Endothelial cell of umbilical vein (primary cell): ENCODE measurements at regions of chr4 and their contacts with region 1.

Region 1: DNA sequence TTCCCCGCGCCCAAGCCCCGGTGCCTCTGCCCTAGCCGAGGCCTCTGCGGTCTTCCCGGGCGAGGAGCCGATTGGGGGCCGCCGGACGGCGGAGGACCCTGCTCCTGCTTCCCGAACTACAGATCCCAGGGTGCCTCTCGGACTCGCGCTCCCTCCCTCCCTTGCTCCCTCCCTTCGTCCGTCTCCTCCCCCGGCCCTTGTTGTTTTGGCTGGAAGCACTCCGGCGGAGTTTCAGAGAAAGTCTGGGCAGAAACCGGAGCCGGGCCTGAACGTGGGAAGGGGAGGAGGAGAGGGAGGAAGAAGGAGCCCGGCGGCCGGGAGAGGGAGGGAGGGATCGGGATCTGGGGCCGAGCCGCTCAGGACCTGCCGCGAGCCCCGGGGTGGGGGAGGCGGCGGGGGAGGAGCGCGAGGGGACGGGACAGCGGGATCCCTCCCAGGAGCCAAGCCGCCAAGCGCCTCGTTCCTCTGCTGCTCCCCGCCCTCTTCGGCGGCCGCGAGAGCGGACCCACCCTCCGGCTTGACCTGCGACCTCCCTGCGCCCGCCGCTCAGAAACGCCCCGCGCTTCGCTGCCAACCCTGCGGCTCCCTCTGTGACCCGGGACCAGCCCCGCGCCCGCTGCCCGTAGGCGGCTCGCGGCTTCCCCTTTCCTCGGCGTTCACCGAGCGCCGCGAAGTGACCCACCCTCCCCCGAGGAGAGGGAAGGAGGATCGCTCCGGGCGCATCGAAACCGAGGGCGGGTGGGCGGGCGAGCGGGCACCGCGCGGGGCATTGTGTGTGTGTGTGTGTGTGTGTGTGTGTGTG is 496 bp upstream of the GAB1 start:
- DNase-seq: peak; percentile 93
- H3K4me3 ChIP-seq: peak overlapping the region; percentile 59 to 99 (median 60)
- H3K27ac ChIP-seq: peak overlapping the region; percentile 61
- H3K4me1 ChIP-seq: peaks cover 5% of the 10 kb centered on the region
- H3K27me3 ChIP-seq: no peaks in the 10 kb centered on the region
- CTCF ChIP-seq: no peak
- POLR2A ChIP-seq: no peak

Region 2: GRCh38 chr4:143071351-143071750 is 264.8 kb before region 1 on chr4:
- CTCF ChIA-PET with region 1: no interaction called
- POLR2A ChIA-PET with region 1: no interaction called
- dilution Hi-C with region 1: no loop called
- intact Hi-C with region 1: no loop called
- DNase-seq: no peak
- H3K4me3 ChIP-seq: no peak overlapping the region
- H3K27ac ChIP-seq: no peak overlapping the region
- H3K4me1 ChIP-seq: no peaks in the 10 kb centered on the region
- H3K27me3 ChIP-seq: no peaks in the 10 kb centered on the region
- CTCF ChIP-seq: no peak
- POLR2A ChIP-seq: no peak

Region 3: DNA sequence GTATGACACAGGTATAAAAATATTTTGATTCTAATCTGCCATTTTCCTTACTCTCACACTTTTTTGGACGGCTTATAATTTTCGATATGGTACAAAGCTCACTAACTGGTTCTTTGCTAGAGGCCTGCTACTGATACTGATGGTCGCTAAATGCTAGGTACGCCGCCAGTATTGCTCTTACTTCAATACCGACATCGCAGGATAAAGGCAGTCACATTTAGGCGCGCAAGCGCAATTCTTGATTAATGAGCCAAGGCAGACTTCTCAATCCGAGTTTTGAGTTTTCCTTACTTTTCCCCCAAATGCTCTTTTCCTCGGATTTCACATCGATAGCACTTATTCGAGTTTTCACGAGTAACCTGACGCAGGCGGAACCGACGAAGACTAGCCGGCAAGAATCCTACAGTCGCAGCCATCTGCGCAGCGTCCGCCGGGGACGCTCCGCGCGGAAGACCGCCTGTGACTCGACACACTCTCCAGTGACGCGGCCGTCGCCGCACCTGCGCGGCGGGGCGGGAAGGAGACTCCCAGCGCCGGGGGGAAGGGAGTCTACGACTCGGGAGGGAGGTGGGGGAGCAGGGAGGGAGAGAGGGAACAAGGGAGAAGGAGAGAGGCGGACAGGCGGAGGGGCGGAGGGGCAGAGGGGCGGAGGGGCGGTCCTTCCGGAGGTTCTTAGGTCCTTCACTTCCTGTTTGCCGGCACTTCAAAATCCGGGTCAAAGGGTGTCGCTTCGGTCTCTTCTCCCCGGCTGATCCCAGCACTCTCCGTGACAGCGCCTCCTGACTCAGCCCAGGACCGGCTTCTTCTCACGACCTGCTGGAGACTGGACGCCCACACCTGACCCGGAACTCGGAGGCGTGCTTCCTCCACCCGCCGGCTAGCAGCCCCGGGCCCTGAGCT is 151.7 kb before region 1 on chr4 and contains the start of gene USP38:
- CTCF ChIA-PET with region 1: interaction called, 3 read pairs
- POLR2A ChIA-PET with region 1: no interaction called
- dilution Hi-C with region 1: no loop called
- intact Hi-C with region 1: loop called (anchors 1 kb)
- DNase-seq: peak; percentile 90
- H3K4me3 ChIP-seq: peak within 1 kb of the TSS; percentile 64 to 84 (median 69)
- H3K27ac ChIP-seq: peak within 1 kb of the TSS; percentile 73
- H3K4me1 ChIP-seq: peaks cover 30% of the 10 kb centered on the region
- H3K27me3 ChIP-seq: no peaks in the 10 kb centered on the region
- CTCF ChIP-seq: no peak
- POLR2A ChIP-seq: peak; percentile 49
- total RNA-seq, gene USP38: 17.0 and 18.1 TPM in 2 replicates

Region 4: GRCh38 chr4:143286701-143287571 is 49.2 kb before region 1 on chr4:
- CTCF ChIA-PET with region 1: no interaction called
- POLR2A ChIA-PET with region 1: no interaction called
- dilution Hi-C with region 1: no loop called
- intact Hi-C with region 1: no loop called
- DNase-seq: no peak
- H3K4me3 ChIP-seq: no peak overlapping the region
- H3K27ac ChIP-seq: no peak overlapping the region
- H3K4me1 ChIP-seq: no peaks in the 10 kb centered on the region
- H3K27me3 ChIP-seq: peaks cover 0 to 5% of the 10 kb centered on the region in 2 experiments
- CTCF ChIP-seq: no peak
- POLR2A ChIP-seq: no peak

Region 5: GRCh38 chr4:143351774-143352451 is 15.7 kb after region 1 on chr4:
- CTCF ChIA-PET with region 1: interaction called, 13 read pairs
- POLR2A ChIA-PET with region 1: no interaction called
- dilution Hi-C with region 1: no loop called
- intact Hi-C with region 1: no loop called
- DNase-seq: peak; percentile 92
- H3K4me3 ChIP-seq: no peak overlapping the region
- H3K27ac ChIP-seq: peak overlapping the region; percentile 51
- H3K4me1 ChIP-seq: peaks cover 17% of the 10 kb centered on the region
- H3K27me3 ChIP-seq: no peaks in the 10 kb centered on the region
- CTCF ChIP-seq: no peak
- POLR2A ChIP-seq: no peak

Region 6: DNA sequence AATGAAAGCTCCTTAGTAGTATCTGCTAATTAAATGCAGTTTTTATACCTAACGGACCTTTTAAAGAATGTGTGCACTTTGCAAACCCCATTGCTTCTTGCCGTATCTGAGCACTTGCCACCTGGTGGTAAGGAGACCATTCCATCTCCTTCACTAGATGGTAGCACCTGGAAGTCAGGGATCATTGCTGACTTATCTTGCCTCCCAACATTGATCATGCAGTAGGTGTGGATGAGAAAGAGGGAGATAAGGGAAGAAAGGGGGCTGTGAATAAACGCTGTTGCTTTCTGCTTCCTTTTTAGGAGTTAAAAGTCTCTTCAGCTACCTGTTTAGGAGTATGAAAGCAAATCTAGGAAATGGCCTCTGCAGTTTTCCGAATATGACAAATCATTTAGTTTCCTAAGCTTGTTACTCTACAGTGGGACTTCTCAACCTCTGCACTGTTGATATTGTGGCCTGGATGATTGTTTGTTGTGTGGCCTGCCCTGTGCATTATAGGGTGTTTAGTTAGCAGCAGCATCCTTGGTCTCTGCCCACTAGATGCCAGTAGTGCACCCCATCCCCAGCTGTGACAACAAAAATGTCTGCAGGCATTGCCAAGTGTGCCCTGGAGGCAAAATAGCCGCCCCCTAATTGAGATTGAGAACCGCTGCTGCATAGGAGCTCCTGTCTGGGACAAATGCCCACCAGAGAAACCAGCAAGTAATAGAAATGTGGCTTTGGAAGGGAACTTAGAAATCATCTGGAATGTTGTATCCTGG is 39.3 kb after region 1 on chr4:
- CTCF ChIA-PET with region 1: interaction called, 14 read pairs
- POLR2A ChIA-PET with region 1: no interaction called
- dilution Hi-C with region 1: no loop called
- intact Hi-C with region 1: no loop called
- DNase-seq: peak; percentile 58
- H3K4me3 ChIP-seq: no peak overlapping the region
- H3K27ac ChIP-seq: no peak overlapping the region
- H3K4me1 ChIP-seq: no peaks in the 10 kb centered on the region
- H3K27me3 ChIP-seq: no peaks in the 10 kb centered on the region
- CTCF ChIP-seq: peak; percentile 21 to 53
- POLR2A ChIP-seq: no peak

Region 7: DNA sequence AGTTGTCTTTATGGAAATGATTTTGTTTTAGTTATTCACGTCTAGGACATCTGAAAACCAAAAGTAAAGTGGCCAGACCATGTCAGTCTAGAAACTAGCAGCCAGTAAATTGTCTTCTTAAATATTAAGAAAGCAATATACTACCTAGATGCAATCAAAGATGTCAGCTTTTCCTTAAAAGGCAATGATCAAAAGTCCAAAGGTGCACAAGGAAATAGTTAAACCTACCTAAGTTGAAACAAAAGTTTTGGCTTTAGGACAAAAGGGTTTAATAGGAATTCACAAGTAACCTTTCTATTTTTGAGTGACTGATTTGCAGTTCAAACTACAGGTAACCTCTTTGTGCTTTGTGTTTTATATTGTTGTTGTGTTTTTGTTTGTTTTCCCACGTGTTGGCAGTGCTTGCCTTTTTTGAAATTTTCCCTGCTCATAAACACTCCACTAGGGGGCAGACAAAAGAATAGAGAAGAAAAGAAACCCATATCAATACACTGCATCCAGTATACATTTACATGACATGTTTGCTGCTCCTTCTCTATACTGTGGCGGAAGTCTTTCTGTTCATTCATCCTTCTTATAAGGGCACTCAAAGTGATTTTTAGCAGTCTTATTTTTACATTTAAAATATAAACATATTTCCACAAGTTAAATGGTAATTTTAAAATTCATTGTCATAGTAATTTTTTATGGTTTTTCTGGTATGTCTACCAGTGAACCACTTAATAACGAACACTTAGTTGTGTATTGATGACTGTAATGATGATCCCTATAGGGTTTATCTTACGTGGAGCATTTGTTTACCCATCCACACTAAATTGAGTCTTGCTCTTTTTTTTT is 63.2 kb after region 1 on chr4:
- CTCF ChIA-PET with region 1: interaction called, 9 read pairs
- POLR2A ChIA-PET with region 1: no interaction called
- dilution Hi-C with region 1: no loop called
- intact Hi-C with region 1: loop called (anchors 1 kb)
- DNase-seq: peak; percentile 72
- H3K4me3 ChIP-seq: no peak overlapping the region
- H3K27ac ChIP-seq: no peak overlapping the region
- H3K4me1 ChIP-seq: peaks cover 33% of the 10 kb centered on the region
- H3K27me3 ChIP-seq: no peaks in the 10 kb centered on the region
- CTCF ChIP-seq: peak; percentile 46 to 48
- POLR2A ChIP-seq: no peak

Region 8: GRCh38 chr4:143513306-143514168 is 177.4 kb after region 1 on chr4 and contains the start of gene SMARCA5:
- CTCF ChIA-PET with region 1: no interaction called
- POLR2A ChIA-PET with region 1: interaction called, 4 read pairs
- dilution Hi-C with region 1: no loop called
- intact Hi-C with region 1: loop called (anchors 1 kb)
- DNase-seq: peak; percentile 99
- H3K4me3 ChIP-seq: peak within 1 kb of the TSS; percentile 81 to 88 (median 84)
- H3K27ac ChIP-seq: peak within 1 kb of the TSS; percentile 76
- H3K4me1 ChIP-seq: peaks cover 23% of the 10 kb centered on the region
- H3K27me3 ChIP-seq: peaks cover 3 to 11% of the 10 kb centered on the region in 2 experiments
- CTCF ChIP-seq: no peak
- POLR2A ChIP-seq: peak; percentile 73
- total RNA-seq, gene SMARCA5: 54.4 and 57.6 TPM in 2 replicates